Heart right ventricle (tissue), 16 donors: ENCODE measurements at regions of chr7 and their contacts with region 1.

Region 1: GRCh38 chr7:130733931-130734814 is at the start of gene KLF14:
- DNase-seq: peak in 1 of 2 donors; percentile 15
- ATAC-seq: peak in 3 of 8 donors; percentile 33 to 66 (median 64)
- H3K4me3 ChIP-seq: peak within 1 kb of the TSS in 9 of 10 donors; percentile 26 to 55 (median 51)
- H3K27ac ChIP-seq: peak within 1 kb of the TSS in 2 of 10 donors; percentile 26 to 36
- H3K4me1 ChIP-seq: peaks cover 0 to 8% (median 0%) of the 10 kb centered on the region in 9 donors
- H3K27me3 ChIP-seq: peaks cover 0 to 98% (median 87%) of the 10 kb centered on the region in 7 donors
- CTCF ChIP-seq: no peak
- total RNA-seq, gene KLF14: 0.07 to 0.49 (median 0.14) TPM in 7 of 10 donors, not detected in the others

Region 2: GRCh38 chr7:130254555-130254954 is 479.6 kb before region 1 on chr7:
- intact Hi-C with region 1: loop called in 4 of 10 experiments (anchors 10 kb)
- DNase-seq: no peak
- ATAC-seq: no peak
- H3K4me3 ChIP-seq: no peak overlapping the region
- H3K27ac ChIP-seq: no peak overlapping the region
- H3K4me1 ChIP-seq: no peaks in the 10 kb centered on the region
- H3K27me3 ChIP-seq: no peaks in the 10 kb centered on the region
- CTCF ChIP-seq: no peak

Region 3: DNA sequence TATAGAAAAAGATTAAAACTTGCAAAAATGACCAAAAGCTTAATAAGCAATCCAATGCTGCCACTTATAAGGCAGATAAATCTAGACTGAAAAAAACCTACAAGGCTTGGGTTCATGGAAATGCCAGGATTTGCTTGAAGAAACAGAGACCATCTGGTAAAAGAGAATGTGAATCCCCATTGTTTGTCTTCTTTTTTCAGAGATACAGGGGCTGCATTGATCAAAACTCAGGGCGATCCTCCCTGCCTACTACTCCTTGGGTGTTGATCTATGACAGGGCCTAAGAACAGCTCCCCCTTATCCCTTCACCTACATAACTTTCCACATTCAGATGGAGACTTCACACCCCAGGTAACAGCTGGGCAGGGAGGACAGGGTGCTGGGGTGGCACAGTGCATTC is 44.5 kb before region 1 on chr7:
- intact Hi-C with region 1: no loop called
- DNase-seq: no peak
- ATAC-seq: no peak
- H3K4me3 ChIP-seq: no peak overlapping the region
- H3K27ac ChIP-seq: no peak overlapping the region
- H3K4me1 ChIP-seq: no peaks in the 10 kb centered on the region
- H3K27me3 ChIP-seq: no peaks in the 10 kb centered on the region
- CTCF ChIP-seq: no peak

Region 4: GRCh38 chr7:130758429-130759056 is 24.4 kb after region 1 on chr7:
- intact Hi-C with region 1: loop called in 1 of 10 experiments (anchors 1 kb)
- DNase-seq: no peak
- ATAC-seq: no peak
- H3K4me3 ChIP-seq: no peak overlapping the region
- H3K27ac ChIP-seq: no peak overlapping the region
- H3K4me1 ChIP-seq: no peaks in the 10 kb centered on the region
- H3K27me3 ChIP-seq: no peaks in the 10 kb centered on the region
- CTCF ChIP-seq: peak; percentile 53 to 78 (median 68)